ENCODE measurements at regions of chr6 and their contacts with region 1.

Region 1: DNA sequence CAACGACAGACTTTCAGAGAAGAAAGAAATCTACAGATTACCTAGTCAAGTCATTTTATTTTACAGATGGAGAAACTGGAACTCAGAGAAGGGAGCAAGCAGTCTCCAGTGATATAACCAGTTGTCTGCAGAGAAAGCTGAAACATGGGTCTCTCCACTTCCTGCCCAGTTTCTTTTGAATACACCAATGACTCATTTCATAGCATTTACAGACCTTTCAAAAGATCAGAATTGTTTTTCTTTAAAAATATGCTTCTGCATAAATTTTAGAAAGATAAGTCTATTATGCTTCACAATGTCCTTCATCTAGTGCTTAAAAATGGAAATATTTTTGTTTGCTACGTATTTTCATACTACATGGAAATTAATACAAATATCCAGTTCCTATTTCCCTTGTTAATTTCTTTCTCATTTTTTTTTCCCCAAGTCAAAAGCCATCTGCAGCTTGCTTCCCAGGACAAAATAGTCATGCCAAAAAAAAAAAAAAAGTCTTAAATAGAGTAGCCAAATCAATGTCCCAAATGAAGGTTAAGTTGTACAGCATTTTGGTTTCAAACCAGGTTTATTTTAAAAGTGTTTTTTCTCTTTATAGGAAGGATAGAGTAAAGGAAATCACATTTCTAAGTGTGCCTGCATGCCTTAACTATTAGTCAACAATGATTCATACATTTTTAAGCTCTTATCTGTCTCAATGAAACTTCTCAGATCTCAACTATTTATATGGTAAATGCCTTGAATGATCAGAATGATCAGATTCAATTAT is 36.9 kb downstream of the ARHGAP18 start:
- DNase-seq: peak in 2 of 9 donors; percentile 7 to 26
- ATAC-seq: peak; percentile 35
- H3K4me3 ChIP-seq: no peak overlapping the region
- H3K4me3 Mint-ChIP-seq: peak overlapping the region in 9 of 10 donors; percentile 69 to 88 (median 85)
- H3K27ac ChIP-seq: peak overlapping the region; percentile 34
- H3K27ac Mint-ChIP-seq: peak overlapping the region in 8 of 9 donors; percentile 40 to 95 (median 85)
- H3K4me1 ChIP-seq: peaks cover 16 to 22% of the 10 kb centered on the region in 2 donors
- H3K4me1 Mint-ChIP-seq: peaks cover 18 to 57% (median 25%) of the 10 kb centered on the region in 7 donors
- H3K27me3 ChIP-seq: no peaks in the 10 kb centered on the region
- H3K27me3 Mint-ChIP-seq: no peaks in the 10 kb centered on the region

Region 2: GRCh38 chr6:129490521-129491245 is 182.4 kb before region 1 on chr6:
- CTCF ChIA-PET with region 1: no interaction called
- POLR2A ChIA-PET with region 1: no interaction called
- intact Hi-C with region 1: loop called (anchors 1 to 5 kb)
- DNase-seq: peak in 8 of 9 donors; percentile 53 to 89 (median 72)
- ATAC-seq: peak; percentile 96
- H3K4me3 ChIP-seq: peak overlapping the region; percentile 38
- H3K4me3 Mint-ChIP-seq: peak overlapping the region; percentile 61 to 90 (median 76)
- H3K27ac ChIP-seq: peak overlapping the region; percentile 73
- H3K27ac Mint-ChIP-seq: peak overlapping the region; percentile 84 to 97 (median 94)
- H3K4me1 ChIP-seq: peaks cover 15 to 21% of the 10 kb centered on the region in 2 donors
- H3K4me1 Mint-ChIP-seq: peaks cover 11 to 46% (median 32%) of the 10 kb centered on the region in 7 donors
- H3K27me3 ChIP-seq: no peaks in the 10 kb centered on the region
- H3K27me3 Mint-ChIP-seq: no peaks in the 10 kb centered on the region

Region 3: DNA sequence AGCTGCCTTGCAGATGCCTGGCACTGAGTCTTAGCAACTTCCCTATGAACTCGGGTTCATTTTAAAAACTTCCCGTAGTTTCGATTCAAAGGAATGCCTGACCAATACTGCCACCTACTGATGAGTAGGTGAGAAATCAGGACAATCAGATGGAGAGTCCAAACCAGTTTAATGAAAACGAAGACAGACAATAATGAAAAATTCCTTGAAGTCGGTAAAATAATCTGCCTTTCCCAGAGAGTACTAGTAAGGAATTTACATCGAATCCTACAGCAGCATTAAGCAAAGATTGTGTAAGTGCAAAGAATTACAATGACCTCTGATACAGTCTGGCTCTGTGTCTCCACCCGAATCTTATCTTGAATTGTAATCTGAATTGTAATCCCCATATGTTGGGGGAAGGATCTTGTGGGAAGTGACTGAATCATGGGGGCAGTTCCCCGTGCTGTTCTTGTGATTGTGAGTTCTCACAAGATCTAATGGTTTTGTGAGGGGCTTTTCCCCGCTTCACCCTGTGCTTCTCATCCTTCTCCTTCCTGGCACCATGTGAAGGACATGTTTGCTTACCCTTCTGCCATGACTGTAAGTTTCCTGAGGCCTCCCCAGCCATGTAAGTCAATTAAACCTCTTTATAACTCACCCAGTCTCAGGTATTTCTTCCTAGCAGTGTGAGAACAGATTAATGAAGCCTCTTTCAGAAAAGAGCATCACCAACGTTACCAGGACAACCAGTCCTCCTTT is 97.5 kb before region 1 on chr6:
- CTCF ChIA-PET with region 1: no interaction called
- POLR2A ChIA-PET with region 1: no interaction called
- intact Hi-C with region 1: no loop called
- DNase-seq: peak in 5 of 9 donors; percentile 4 to 31 (median 21)
- ATAC-seq: peak; percentile 71
- H3K4me3 ChIP-seq: no peak overlapping the region
- H3K4me3 Mint-ChIP-seq: peak overlapping the region in 9 of 10 donors; percentile 48 to 66 (median 59)
- H3K27ac ChIP-seq: no peak overlapping the region
- H3K27ac Mint-ChIP-seq: peak overlapping the region in 2 of 9 donors; percentile 22 to 41
- H3K4me1 ChIP-seq: peaks cover 0 to 3% of the 10 kb centered on the region in 2 donors
- H3K4me1 Mint-ChIP-seq: peaks cover 0 to 11% (median 8%) of the 10 kb centered on the region in 7 donors
- H3K27me3 ChIP-seq: no peaks in the 10 kb centered on the region
- H3K27me3 Mint-ChIP-seq: peaks cover 0 to 5% (median 0%) of the 10 kb centered on the region in 5 donors

Region 4: DNA sequence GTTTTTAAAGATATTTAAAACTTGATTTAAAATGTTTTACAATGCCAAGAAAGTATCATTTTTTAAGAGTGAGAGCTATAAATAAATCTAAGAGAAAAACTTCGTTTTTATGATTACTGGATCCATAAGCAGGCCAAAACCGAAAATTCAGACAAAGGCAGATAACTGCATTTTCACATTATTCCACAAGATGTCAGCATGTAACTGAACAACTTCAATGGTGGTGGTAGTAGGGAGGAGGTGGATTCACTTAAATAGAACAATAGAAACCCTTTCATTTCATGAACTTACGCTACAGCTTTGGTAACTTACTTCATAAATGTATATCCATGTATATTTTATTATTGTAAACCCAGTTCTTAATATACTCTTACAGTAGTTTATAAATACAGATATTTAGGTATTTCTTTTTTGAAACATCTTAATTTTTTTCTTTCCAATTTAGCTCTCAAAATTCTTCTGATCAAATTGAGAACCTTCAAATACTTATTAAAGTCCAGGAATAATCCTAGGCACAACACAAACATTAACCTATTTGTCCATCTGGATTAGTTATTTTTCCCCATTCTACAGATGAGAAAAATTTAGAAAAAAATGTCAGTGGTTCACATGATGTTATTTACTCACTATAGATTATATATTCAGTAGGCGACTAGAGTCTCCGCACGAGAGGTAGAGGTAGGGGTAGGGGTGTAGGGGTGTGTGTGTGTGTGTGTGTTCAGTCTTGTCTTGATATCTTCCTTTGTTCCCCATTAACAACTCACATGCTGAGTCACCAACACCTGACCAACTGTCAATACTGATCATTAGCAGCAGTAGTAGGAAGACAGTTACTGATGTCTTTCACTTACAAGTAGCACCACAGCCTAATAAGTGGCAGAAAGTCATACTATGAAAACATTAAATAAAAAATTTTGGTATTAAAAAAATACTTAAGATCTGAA is 74.5 kb before region 1 on chr6:
- CTCF ChIA-PET with region 1: interaction called, 5 read pairs
- POLR2A ChIA-PET with region 1: no interaction called
- intact Hi-C with region 1: loop called (anchors 1 kb)
- DNase-seq: peak in 7 of 9 donors; percentile 37 to 79 (median 70)
- ATAC-seq: peak; percentile 95
- H3K4me3 ChIP-seq: no peak overlapping the region
- H3K4me3 Mint-ChIP-seq: no peak overlapping the region
- H3K27ac ChIP-seq: no peak overlapping the region
- H3K27ac Mint-ChIP-seq: no peak overlapping the region
- H3K4me1 ChIP-seq: no peaks in the 10 kb centered on the region
- H3K4me1 Mint-ChIP-seq: peaks cover 0 to 2% (median 0%) of the 10 kb centered on the region in 7 donors
- H3K27me3 ChIP-seq: no peaks in the 10 kb centered on the region
- H3K27me3 Mint-ChIP-seq: peaks cover 0 to 3% (median 0%) of the 10 kb centered on the region in 5 donors

Region 5: DNA sequence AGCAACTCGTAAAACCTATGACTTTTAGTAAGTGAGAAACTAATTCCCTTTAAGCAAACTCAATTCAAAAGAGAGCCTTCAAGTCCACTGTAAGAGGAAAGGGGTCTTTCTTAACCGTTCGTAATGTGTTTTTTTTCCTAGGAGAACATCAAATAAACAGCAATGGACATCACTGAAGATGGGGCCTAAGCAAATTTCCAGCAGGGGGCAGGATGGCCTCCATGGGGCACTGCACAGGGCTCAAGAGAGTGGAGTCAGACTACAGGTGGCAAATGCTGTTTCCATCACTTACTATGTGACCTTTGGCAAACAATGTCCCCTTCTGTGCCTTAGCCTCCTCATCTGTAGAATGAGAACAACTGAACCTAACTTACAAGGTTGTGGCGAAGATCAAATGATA is 51.8 kb before region 1 on chr6:
- CTCF ChIA-PET with region 1: interaction called, 3 read pairs
- POLR2A ChIA-PET with region 1: no interaction called
- intact Hi-C with region 1: loop called in 1 of 2 experiments (anchors 1 kb)
- DNase-seq: peak in 4 of 9 donors; percentile 8 to 27 (median 9)
- ATAC-seq: peak; percentile 48
- H3K4me3 ChIP-seq: no peak overlapping the region
- H3K4me3 Mint-ChIP-seq: no peak overlapping the region
- H3K27ac ChIP-seq: no peak overlapping the region
- H3K27ac Mint-ChIP-seq: no peak overlapping the region
- H3K4me1 ChIP-seq: no peaks in the 10 kb centered on the region
- H3K4me1 Mint-ChIP-seq: peaks cover 0 to 5% (median 0%) of the 10 kb centered on the region in 7 donors
- H3K27me3 ChIP-seq: no peaks in the 10 kb centered on the region
- H3K27me3 Mint-ChIP-seq: no peaks in the 10 kb centered on the region

Region 6: DNA sequence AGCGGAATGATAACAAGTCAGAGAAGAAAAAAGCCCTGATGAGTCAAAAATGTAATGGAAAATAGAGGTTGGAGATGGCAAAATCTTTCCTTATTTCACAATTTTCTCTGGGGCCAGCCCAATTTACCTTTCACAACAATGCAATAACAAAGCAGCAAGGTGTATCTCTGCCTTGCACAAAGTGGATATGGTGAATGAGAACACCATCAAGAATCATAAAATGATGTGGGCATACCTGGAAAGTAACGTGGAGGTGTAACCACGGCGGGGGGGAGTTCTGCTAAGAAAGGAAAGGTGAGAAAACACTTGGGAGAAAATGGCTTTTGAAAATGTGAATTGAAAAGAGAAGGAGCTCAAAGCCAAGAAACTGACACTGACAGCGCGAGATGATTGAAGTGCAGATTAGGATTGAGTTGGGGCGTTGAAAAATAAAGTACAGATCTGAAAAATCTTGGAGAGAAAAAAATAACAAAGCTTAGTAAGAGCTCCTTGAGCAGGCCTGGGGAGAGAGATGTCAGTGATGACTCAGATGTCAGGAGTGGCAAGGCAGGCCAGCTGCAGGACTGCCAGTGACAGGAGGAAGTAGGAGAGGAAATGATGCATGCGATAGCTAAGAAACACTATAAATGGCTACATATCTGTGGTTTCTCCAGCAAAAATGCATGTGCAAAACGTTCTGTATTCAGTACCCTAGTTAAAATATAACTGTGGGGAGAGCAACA is 10.7 kb after region 1 on chr6:
- CTCF ChIA-PET with region 1: interaction called, 6 read pairs
- POLR2A ChIA-PET with region 1: interaction called, 7 read pairs
- intact Hi-C with region 1: loop called (anchors 1 kb)
- DNase-seq: peak in 8 of 9 donors; percentile 11 to 54 (median 34)
- ATAC-seq: peak; percentile 92
- H3K4me3 ChIP-seq: no peak overlapping the region
- H3K4me3 Mint-ChIP-seq: peak overlapping the region in 8 of 10 donors; percentile 28 to 73 (median 34)
- H3K27ac ChIP-seq: no peak overlapping the region
- H3K27ac Mint-ChIP-seq: peak overlapping the region in 8 of 9 donors; percentile 1 to 81 (median 50)
- H3K4me1 ChIP-seq: peaks cover 31 to 46% of the 10 kb centered on the region in 2 donors
- H3K4me1 Mint-ChIP-seq: peaks cover 38 to 68% (median 45%) of the 10 kb centered on the region in 7 donors
- H3K27me3 ChIP-seq: no peaks in the 10 kb centered on the region
- H3K27me3 Mint-ChIP-seq: no peaks in the 10 kb centered on the region

Region 7: DNA sequence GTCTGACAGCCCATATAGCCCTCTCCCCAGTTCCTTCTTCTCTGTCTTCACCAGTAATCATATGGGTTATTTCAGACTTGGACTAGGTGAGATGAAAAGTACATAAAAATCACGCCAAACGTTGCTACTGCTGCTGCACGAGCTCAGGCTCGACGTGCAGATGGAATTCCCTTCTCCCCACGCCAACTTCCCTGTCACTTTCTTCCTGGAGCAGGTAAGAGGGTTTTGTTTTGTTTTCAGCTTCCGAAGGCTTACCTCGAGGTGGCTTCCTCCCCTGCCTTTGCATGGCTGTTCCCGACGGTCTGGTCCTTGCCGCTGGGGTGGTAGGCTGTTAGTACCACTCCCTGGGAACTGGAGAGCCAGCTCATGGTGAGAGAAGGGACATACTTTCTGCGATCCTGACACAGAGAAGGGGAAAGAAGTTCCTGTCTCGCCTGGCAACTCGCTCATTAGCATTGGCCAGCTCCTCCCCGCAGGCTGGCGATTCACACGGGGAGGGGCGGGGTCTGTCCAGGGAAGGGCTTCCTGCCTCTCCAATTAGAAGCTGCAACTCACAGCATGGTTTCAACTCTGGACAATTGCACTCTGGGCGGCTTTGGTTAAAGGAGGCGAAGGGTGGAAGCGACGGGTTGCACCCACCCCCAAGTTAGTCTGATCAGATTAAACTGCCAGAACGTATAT is 36.8 kb after region 1 on chr6 and contains the start of gene ARHGAP18:
- CTCF ChIA-PET with region 1: interaction called, 3 read pairs
- POLR2A ChIA-PET with region 1: interaction called, 3 read pairs
- intact Hi-C with region 1: loop called (anchors 1 kb)
- DNase-seq: peak; percentile 40 to 69 (median 49)
- ATAC-seq: peak; percentile 95
- H3K4me3 ChIP-seq: peak within 1 kb of the TSS; percentile 66
- H3K4me3 Mint-ChIP-seq: peak within 1 kb of the TSS; percentile 90 to 99 (median 94)
- H3K27ac ChIP-seq: peak within 1 kb of the TSS; percentile 37
- H3K27ac Mint-ChIP-seq: peak within 1 kb of the TSS; percentile 53 to 93 (median 83)
- H3K4me1 ChIP-seq: peaks cover 0 to 8% of the 10 kb centered on the region in 2 donors
- H3K4me1 Mint-ChIP-seq: peaks cover 21 to 43% (median 30%) of the 10 kb centered on the region in 7 donors
- H3K27me3 ChIP-seq: no peaks in the 10 kb centered on the region
- H3K27me3 Mint-ChIP-seq: peaks cover 0 to 2% (median 0%) of the 10 kb centered on the region in 5 donors
- total RNA-seq, gene ARHGAP18: 1.1 to 9.4 (median 2.0) TPM

Measured in naive thymus-derived CD4-positive, alpha-beta T cell (primary cell).